ENCODE measurements at regions of chr5 and their contacts with region 1.

Region 1: GRCh38 chr5:141636413-141637122 is at the starts of genes HDAC3 and RELL2:
- DNase-seq: peak; percentile 85
- H3K4me3 ChIP-seq: peak within 1 kb of the TSS; percentile 59 to 93 (median 86)
- H3K4me3 Mint-ChIP-seq: peak within 1 kb of the TSS; percentile 87 to 93
- H3K27ac ChIP-seq: peak within 1 kb of the TSS; percentile 15 to 88
- H3K27ac Mint-ChIP-seq: peak within 1 kb of the TSS; percentile 84 to 92 (median 87)
- H3K4me1 ChIP-seq: peaks cover 41 to 51% of the 10 kb centered on the region in 2 donors
- H3K4me1 Mint-ChIP-seq: peaks cover 38% of the 10 kb centered on the region
- H3K27me3 ChIP-seq: no peaks in the 10 kb centered on the region
- H3K27me3 Mint-ChIP-seq: peaks cover 0 to 4% (median 0%) of the 10 kb centered on the region in 3 donors
- CTCF ChIP-seq: no peak
- polyA plus RNA-seq, gene HDAC3: 80.5 to 103 (median 82.3) TPM
- polyA plus RNA-seq, gene RELL2: 1.0 to 17.3 (median 1.3) TPM

Region 2: DNA sequence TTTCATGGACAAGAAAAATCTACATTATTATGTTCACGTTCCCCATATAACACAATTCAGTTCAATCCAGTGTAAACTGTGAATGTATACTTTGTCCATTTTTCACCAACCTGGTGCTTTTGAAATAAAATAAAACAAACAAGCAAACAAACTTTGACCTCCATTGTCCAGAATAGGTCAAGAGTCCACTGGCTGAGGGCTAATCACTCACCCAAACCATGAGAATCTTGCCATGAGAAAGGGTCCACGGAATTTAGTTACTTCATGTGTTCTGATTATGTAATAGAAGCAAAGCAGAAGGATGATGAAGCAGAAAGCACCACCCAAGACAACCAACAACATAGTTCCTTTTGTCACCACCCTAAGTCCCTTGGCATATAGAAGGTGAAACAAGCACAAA is 46.4 kb before region 1 on chr5:
- intact Hi-C with region 1: loop called in 1 of 2 experiments (anchors 5 kb)
- DNase-seq: peak; percentile 60 to 79 (median 77)
- H3K4me3 ChIP-seq: peak overlapping the region in 1 of 3 experiments; percentile 27
- H3K4me3 Mint-ChIP-seq: peak overlapping the region in 1 of 2 donors; percentile 31
- H3K27ac ChIP-seq: peak overlapping the region; percentile 72 to 80
- H3K27ac Mint-ChIP-seq: peak overlapping the region; percentile 88 to 97 (median 93)
- H3K4me1 ChIP-seq: peaks cover 40 to 57% of the 10 kb centered on the region in 2 donors
- H3K4me1 Mint-ChIP-seq: peaks cover 52% of the 10 kb centered on the region
- H3K27me3 ChIP-seq: no peaks in the 10 kb centered on the region
- H3K27me3 Mint-ChIP-seq: no peaks in the 10 kb centered on the region
- CTCF ChIP-seq: no peak

Region 3: DNA sequence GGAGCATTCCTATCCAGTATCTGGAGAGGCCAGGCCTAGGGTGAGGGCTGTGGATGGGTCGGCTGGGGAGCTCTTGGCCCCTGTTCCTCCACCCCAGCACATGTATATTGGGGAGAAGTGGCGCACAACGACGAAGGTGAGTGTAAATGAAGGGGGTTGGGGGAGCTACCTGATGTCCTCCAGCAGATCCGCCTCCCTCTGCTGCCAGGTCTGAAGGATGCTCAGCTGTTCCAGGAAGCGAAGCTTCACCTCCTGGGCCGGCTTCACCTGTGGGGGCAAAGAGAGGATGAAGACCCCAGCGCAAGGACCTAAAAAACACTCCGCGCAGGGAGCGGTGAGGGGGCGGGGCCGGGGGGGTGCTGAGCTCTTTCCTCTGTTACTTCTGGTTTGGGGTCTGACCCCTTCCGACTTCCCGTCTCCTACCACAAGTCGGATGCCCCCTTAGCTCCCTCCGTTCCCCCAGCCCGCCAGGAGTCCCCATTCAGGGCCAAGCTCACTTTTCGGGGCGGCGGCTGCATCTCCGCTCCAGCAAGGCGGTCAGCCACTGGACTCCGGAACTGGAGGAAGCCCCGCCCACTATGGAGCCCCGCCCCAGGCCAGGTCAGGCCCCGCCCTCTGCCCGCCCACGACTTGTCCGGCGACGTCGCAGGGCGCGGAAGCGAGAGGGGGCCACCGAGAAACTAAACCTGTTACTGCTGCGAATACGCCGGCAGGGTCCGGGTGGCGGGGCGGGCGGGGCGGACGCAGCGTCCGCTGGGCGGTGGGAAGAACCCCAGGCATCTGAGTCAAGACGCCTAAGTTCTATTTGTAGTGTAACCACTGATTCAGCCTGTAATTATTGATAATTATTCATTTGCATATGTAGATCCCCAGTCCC is 14.5 kb after region 1 on chr5 and contains the start of gene FCHSD1:
- intact Hi-C with region 1: loop called in 1 of 2 experiments (anchors 2 kb)
- DNase-seq: peak; percentile 80
- H3K4me3 ChIP-seq: peak within 1 kb of the TSS; percentile 78 to 90 (median 90)
- H3K4me3 Mint-ChIP-seq: peak within 1 kb of the TSS; percentile 99 to 100
- H3K27ac ChIP-seq: peak within 1 kb of the TSS in 1 of 2 donors; percentile 65
- H3K27ac Mint-ChIP-seq: peak within 1 kb of the TSS; percentile 32 to 94 (median 92)
- H3K4me1 ChIP-seq: peaks cover 13 to 20% of the 10 kb centered on the region in 2 donors
- H3K4me1 Mint-ChIP-seq: peaks cover 27% of the 10 kb centered on the region
- H3K27me3 ChIP-seq: no peaks in the 10 kb centered on the region
- H3K27me3 Mint-ChIP-seq: peaks cover 0 to 2% (median 2%) of the 10 kb centered on the region in 3 donors
- CTCF ChIP-seq: no peak
- polyA plus RNA-seq, gene FCHSD1: 3.0 to 73.3 (median 3.4) TPM

Measured in CD14-positive monocyte (primary cell).